Activated T-helper 2 cell treated with anti-CD3 and anti-CD28 coated beads, Interferon-gamma antibody, Interleukin-2, Interleukin-4, amounts not matched to agents 10 μg/mL and 5 μg/mL and 100 μg/mL, durations not matched to agents 14 hours and 24 hours and 36 hours (primary cell): ENCODE measurements at regions of chr10 and their contacts with region 1.

Region 1: GRCh38 chr10:80472234-80473095 is 18.4 kb downstream of the TSPAN14 start:
- DNase-seq: no peak
- H3K4me3 Mint-ChIP-seq: peak overlapping the region; percentile 60
- H3K27ac Mint-ChIP-seq: peak overlapping the region; percentile 92
- H3K4me1 Mint-ChIP-seq: peaks cover 74% of the 10 kb centered on the region
- H3K27me3 Mint-ChIP-seq: no peaks in the 10 kb centered on the region

Region 2: GRCh38 chr10:80177781-80178540 is 294.5 kb before region 1 on chr10:
- intact Hi-C with region 1: no loop called
- DNase-seq: no peak
- H3K4me3 Mint-ChIP-seq: no peak overlapping the region
- H3K27ac Mint-ChIP-seq: peak overlapping the region; percentile 46
- H3K4me1 Mint-ChIP-seq: peaks cover 24% of the 10 kb centered on the region
- H3K27me3 Mint-ChIP-seq: no peaks in the 10 kb centered on the region

Region 3: DNA sequence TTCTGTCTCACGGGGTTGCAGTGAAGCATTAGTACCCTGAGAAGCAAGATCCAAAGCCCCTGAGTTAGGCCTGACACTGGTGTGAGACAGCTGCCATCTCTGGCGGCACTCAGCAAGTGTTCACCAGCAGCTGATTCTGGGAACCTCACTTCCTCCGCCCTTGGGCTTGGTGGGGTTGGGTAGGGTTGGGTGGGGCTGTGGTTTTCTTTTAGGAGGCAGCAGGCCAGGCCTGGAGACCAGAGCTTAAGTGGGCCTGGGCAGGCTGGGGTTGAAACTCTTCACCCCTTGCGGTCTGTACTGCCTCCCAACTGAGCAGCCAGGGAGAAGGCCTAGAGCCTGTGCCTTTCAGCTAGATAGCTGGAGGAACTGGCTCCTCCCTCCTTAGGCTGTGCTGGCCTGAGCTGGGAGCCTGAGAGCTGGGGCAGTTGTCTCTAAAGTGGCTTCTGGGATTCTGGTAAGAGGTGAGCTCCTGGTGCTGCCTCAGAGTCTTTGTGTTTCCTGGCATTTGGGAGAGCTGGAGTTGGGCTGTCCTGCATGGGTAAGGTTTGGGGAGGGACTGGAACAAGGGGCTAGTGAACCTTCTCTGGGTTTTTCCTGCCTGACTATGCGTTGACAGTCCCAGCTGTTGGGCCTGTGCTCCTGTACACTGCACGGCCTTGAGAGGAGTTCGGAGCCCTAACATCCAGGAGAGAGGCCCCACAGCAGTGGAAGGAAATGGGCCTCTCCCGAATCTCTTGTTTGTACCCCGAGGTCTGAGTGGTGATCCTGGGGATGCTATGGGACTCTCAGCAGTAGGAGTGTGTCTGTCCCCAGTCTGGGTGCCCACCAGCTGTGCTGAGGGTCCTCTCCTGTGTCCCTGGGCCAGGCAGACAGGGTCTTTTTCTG is 13.2 kb before region 1 on chr10:
- intact Hi-C with region 1: loop called (anchors 1 kb)
- DNase-seq: peak; percentile 62
- H3K4me3 Mint-ChIP-seq: peak overlapping the region; percentile 72
- H3K27ac Mint-ChIP-seq: peak overlapping the region; percentile 80
- H3K4me1 Mint-ChIP-seq: peaks cover 78% of the 10 kb centered on the region
- H3K27me3 Mint-ChIP-seq: no peaks in the 10 kb centered on the region

Region 4: DNA sequence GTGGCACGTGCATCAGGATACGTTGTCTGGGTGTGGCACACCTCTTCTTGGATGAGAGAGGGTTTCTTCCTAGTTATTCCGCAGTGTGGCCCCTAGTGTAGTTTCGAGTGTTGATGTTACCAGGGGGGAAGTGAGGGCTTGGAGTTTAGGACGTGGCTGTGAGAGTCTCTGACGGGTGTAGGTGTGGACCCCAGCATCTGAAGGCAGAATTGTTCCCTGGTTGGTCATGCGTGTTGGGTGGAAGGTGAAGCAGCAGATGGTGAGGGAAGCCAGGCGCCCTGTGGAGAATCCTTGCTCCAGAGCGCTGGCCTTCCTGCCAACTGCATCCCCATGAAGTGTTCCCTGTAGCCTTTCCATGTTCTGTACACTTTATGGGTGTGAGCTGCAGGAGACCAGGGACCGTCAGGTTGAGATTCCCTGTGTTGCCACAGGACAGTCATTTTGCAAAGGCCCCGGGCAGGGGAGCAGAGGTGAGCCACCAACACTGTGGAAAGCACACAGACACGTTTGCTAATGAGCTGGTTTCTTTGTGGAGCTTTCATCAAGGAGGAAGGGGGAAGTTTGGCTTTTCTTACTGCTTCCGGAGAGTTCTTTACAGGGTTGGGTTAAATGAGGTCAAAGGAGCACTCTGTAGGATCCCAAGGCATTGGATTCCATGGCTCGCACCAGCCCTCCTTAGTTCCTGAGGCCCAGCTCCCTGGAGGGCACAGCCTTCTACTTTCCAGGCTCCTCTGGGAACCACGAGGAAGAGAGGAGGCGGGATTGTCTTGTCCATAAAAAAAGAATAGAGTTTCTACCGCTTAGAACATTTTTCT is 13.7 kb after region 1 on chr10:
- intact Hi-C with region 1: loop called (anchors 1 kb)
- DNase-seq: no peak
- H3K4me3 Mint-ChIP-seq: peak overlapping the region; percentile 54
- H3K27ac Mint-ChIP-seq: peak overlapping the region; percentile 93
- H3K4me1 Mint-ChIP-seq: peaks cover 81% of the 10 kb centered on the region
- H3K27me3 Mint-ChIP-seq: no peaks in the 10 kb centered on the region

Region 5: GRCh38 chr10:80504158-80504811 is 31.8 kb after region 1 on chr10:
- intact Hi-C with region 1: loop called (anchors 2 kb)
- DNase-seq: no peak
- H3K4me3 Mint-ChIP-seq: no peak overlapping the region
- H3K27ac Mint-ChIP-seq: peak overlapping the region; percentile 1
- H3K4me1 Mint-ChIP-seq: peaks cover 56% of the 10 kb centered on the region
- H3K27me3 Mint-ChIP-seq: no peaks in the 10 kb centered on the region